Activated T-helper 2 cell treated with anti-CD3 and anti-CD28 coated beads, Interferon-gamma antibody, Interleukin-2, Interleukin-4, amounts not matched to agents 10 μg/mL and 5 μg/mL and 100 μg/mL, durations not matched to agents 14 hours and 24 hours and 36 hours (primary cell): ENCODE measurements at regions of chr14 and their contacts with region 1.

Region 1: GRCh38 chr14:106872611-106873446 is 1346.4 kb downstream of the TMEM121 start:
- DNase-seq: peak; percentile 80
- H3K4me3 Mint-ChIP-seq: no peak overlapping the region
- H3K27ac Mint-ChIP-seq: no peak overlapping the region
- H3K4me1 Mint-ChIP-seq: peaks cover 19% of the 10 kb centered on the region
- H3K27me3 Mint-ChIP-seq: peaks cover 43% of the 10 kb centered on the region

Region 2: GRCh38 chr14:106813477-106813823 is 59.4 kb before region 1 on chr14:
- intact Hi-C with region 1: no loop called
- DNase-seq: no peak
- H3K4me3 Mint-ChIP-seq: no peak overlapping the region
- H3K27ac Mint-ChIP-seq: no peak overlapping the region
- H3K4me1 Mint-ChIP-seq: peaks cover 7% of the 10 kb centered on the region
- H3K27me3 Mint-ChIP-seq: peaks cover 18% of the 10 kb centered on the region

Region 3: GRCh38 chr14:106831322-106831720 is 41.5 kb before region 1 on chr14:
- intact Hi-C with region 1: loop called (anchors 1 kb)
- DNase-seq: peak; percentile 43
- H3K4me3 Mint-ChIP-seq: no peak overlapping the region
- H3K27ac Mint-ChIP-seq: no peak overlapping the region
- H3K4me1 Mint-ChIP-seq: no peaks in the 10 kb centered on the region
- H3K27me3 Mint-ChIP-seq: peaks cover 34% of the 10 kb centered on the region

Region 4: DNA sequence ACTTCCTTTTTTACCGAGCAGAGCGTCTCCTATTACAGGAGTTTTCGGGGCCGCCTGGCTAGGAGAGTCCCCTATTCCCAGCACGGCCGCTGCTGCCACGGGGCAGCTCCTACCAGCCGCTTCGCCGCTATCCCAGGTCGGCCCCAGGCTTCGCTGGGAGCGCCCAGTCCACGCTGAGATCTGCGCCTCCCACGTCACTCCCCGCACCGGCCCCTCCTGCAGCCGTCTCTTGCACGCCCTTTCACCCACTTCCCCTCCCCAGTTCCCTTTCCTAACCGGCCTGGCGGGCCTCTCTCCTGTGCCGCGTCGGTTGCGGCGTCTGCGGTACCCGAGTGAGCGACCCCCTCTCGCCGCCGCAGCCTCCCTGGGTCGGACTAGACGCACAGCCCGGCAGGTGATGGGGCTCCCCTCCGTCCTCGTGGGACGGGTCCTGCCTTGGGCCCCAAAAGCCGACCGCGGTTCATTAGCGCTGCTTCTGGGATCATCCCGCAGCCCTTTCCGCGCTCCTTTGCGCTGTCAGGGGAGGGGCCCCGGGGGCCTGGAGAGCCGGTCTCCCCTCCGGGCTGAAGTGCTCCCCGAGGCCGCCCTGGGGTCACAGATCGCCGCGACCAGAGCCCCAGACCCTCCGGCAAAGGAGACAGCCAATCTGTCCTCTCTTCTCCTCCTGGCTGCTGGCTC is 28.1 kb before region 1 on chr14:
- intact Hi-C with region 1: loop called (anchors 1 kb)
- DNase-seq: peak; percentile 46
- H3K4me3 Mint-ChIP-seq: peak overlapping the region; percentile 87
- H3K27ac Mint-ChIP-seq: peak overlapping the region; percentile 62
- H3K4me1 Mint-ChIP-seq: peaks cover 31% of the 10 kb centered on the region
- H3K27me3 Mint-ChIP-seq: peaks cover 41% of the 10 kb centered on the region